Aorta (tissue), 5 donors: ENCODE measurements at regions of chr5 and their contacts with region 1.

Region 1: GRCh38 chr5:130222573-130222972 is 318.3 kb downstream of the CHSY3 start:
- DNase-seq: no peak
- ATAC-seq: no peak
- H3K4me3 ChIP-seq: no peak overlapping the region
- H3K27ac ChIP-seq: no peak overlapping the region
- H3K4me1 ChIP-seq: no peaks in the 10 kb centered on the region
- H3K27me3 ChIP-seq: no peaks in the 10 kb centered on the region

Region 2: DNA sequence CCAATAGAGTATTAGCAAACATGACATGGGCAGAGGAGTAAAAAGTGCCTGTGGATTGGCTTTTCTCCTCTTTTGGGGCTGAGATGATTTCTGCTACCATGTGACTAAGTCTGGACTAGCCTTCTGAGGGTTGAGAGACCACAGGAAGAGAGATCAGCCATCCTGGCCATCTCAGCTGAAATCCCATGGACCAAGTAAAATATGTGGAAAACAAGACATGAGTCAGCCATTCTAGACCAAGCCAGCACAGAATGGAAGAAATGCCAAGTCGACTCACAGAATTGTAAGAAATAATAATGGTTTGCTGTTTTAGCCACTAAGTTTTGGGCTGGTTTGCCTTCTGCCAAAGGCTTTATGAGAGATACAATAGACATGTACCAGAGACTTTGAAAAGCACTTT is 59.5 kb after region 1 on chr5:
- intact Hi-C with region 1: loop called in 1 of 2 experiments (anchors 5 kb)
- DNase-seq: no peak
- ATAC-seq: peak; percentile 74
- H3K4me3 ChIP-seq: no peak overlapping the region
- H3K27ac ChIP-seq: peak overlapping the region in 1 of 2 donors; percentile 6
- H3K4me1 ChIP-seq: peaks cover 0 to 3% of the 10 kb centered on the region in 2 donors
- H3K27me3 ChIP-seq: no peaks in the 10 kb centered on the region